A673 (cell line): ENCODE measurements at regions of chr6 and their contacts with region 1.

Region 1: GRCh38 chr6:138250513-138251247 is 32.4 kb upstream of the PBOV1 start:
- DNase-seq: no peak
- H3K4me3 ChIP-seq: no peak overlapping the region
- H3K27ac ChIP-seq: no peak overlapping the region
- H3K4me1 ChIP-seq: no peaks in the 10 kb centered on the region
- H3K27me3 ChIP-seq: no peaks in the 10 kb centered on the region
- CTCF ChIP-seq: no peak

Region 2: GRCh38 chr6:138063726-138064125 is 187.0 kb before region 1 on chr6:
- CTCF ChIA-PET with region 1: no interaction called
- POLR2A ChIA-PET with region 1: no interaction called
- intact Hi-C with region 1: no loop called
- DNase-seq: no peak
- H3K4me3 ChIP-seq: no peak overlapping the region
- H3K27ac ChIP-seq: no peak overlapping the region
- H3K4me1 ChIP-seq: no peaks in the 10 kb centered on the region
- H3K27me3 ChIP-seq: no peaks in the 10 kb centered on the region
- CTCF ChIP-seq: no peak

Region 3: DNA sequence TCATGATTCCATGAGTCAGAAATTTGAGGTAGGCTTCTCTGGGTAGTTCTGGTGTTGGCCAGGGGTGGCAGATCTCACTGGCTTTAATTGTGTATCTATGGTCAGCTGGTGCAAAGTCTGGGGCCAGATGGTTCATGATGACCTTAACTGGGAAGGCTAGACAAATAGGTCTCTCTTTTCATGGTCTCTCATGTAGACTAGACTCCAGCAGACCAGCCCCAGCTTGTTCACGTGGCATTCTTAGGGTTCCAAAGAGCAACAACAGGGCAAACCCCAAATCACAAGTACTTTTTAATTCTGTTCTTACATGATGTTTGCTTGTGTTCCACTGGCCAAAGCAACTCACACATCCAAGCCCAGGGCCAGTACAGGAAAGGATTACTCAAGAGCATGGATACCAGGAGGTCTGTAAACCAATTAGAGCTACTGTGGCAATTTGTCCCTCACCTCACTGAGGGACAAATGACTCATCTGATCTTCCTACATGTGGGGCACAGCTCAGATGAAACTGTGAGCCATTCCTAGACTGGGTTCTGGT is 47.1 kb after region 1 on chr6:
- CTCF ChIA-PET with region 1: no interaction called
- POLR2A ChIA-PET with region 1: interaction called, 20 read pairs
- intact Hi-C with region 1: no loop called
- DNase-seq: peak; percentile 33
- H3K4me3 ChIP-seq: no peak overlapping the region
- H3K27ac ChIP-seq: no peak overlapping the region
- H3K4me1 ChIP-seq: no peaks in the 10 kb centered on the region
- H3K27me3 ChIP-seq: no peaks in the 10 kb centered on the region
- CTCF ChIP-seq: no peak